GM12878 (cell line): ENCODE measurements at regions of chr10 and their contacts with region 1.

Region 1: DNA sequence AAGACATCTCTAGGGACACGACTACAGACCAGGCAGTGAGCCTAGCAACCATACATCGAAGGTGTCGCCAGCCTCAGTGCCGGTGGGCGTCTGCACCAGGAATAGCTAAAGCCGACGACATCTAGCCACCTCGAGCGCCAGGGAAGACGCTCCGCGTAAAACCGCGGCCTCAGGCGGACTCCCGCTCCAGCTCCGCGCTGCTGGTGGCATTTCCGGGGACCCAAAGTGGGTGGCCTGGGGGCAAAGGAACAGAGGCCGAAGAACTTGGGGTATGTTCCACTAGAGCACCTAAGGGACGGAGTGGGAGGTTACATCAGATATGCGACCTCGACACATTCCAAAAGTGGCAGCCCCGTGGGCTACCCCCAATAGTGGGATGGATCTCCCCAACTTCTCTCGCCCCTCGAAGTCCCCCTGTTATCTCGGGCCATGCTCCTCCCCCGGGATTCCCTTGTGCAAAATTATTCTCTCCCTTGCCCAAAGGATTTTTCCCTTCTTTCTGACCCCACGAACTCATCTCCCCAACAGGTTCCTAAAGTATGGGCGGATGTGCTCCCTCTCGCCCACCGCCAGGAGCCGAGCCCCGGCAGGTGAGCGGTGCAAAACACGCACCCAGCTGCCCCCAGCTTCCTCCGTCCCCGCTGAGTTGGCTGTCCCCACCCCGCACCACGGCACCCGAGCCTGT is 1.2 kb downstream of the KCNMA1 start:
- DNase-seq: no peak
- ATAC-seq: peak; percentile 27
- H3K4me3 ChIP-seq: no peak overlapping the region
- H3K27ac ChIP-seq: no peak overlapping the region
- H3K4me1 ChIP-seq: no peaks in the 10 kb centered on the region
- H3K27me3 ChIP-seq: no peaks in the 10 kb centered on the region; a peak in 1 of 4 replicates
- CTCF ChIP-seq: no peak
- EP300 ChIP-seq: no peak
- POLR2A ChIP-seq: no peak
- RAD21 ChIP-seq: no peak

Region 2: GRCh38 chr10:77165445-77166208 is 470.8 kb before region 1 on chr10:
- CTCF ChIA-PET with region 1: interaction called, 532 read pairs
- POLR2A ChIA-PET with region 1: interaction called, 3 read pairs
- RAD21 ChIA-PET with region 1: interaction called, 52 read pairs
- SMC1A ChIA-PET with region 1: interaction called, 113 read pairs
- in situ Hi-C with region 1: loop called (anchors 5 kb)
- intact Hi-C with region 1: no loop called
- DNase-seq: peak; percentile 24
- ATAC-seq: peak; percentile 95; the same call in 2 of the 3 replicates
- H3K4me3 ChIP-seq: no peak overlapping the region
- H3K27ac ChIP-seq: no peak overlapping the region
- H3K4me1 ChIP-seq: no peaks in the 10 kb centered on the region
- H3K27me3 ChIP-seq: no peaks in the 10 kb centered on the region
- CTCF ChIP-seq: peak; percentile 80 to 87 (median 81); a peak in 5 of 6 replicates
- EP300 ChIP-seq: no peak
- POLR2A ChIP-seq: no peak
- RAD21 ChIP-seq: peak; percentile 82

Region 3: GRCh38 chr10:77501152-77501845 is 135.1 kb before region 1 on chr10:
- CTCF ChIA-PET with region 1: interaction called, 14 read pairs
- POLR2A ChIA-PET with region 1: interaction called, 7 read pairs
- RAD21 ChIA-PET with region 1: interaction called, 33 read pairs
- SMC1A ChIA-PET with region 1: interaction called, 35 read pairs
- in situ Hi-C with region 1: no loop called
- intact Hi-C with region 1: no loop called
- DNase-seq: no peak
- ATAC-seq: peak; percentile 32
- H3K4me3 ChIP-seq: no peak overlapping the region
- H3K27ac ChIP-seq: no peak overlapping the region
- H3K4me1 ChIP-seq: peaks cover 11% of the 10 kb centered on the region
- H3K27me3 ChIP-seq: no peaks in the 10 kb centered on the region
- CTCF ChIP-seq: no peak
- EP300 ChIP-seq: no peak
- POLR2A ChIP-seq: no peak
- RAD21 ChIP-seq: no peak

Region 4: GRCh38 chr10:77603534-77603927 is 32.9 kb before region 1 on chr10:
- CTCF ChIA-PET with region 1: interaction called, 4 read pairs
- POLR2A ChIA-PET with region 1: interaction called, 4 read pairs
- RAD21 ChIA-PET with region 1: interaction called, 16 read pairs
- SMC1A ChIA-PET with region 1: interaction called, 15 read pairs
- in situ Hi-C with region 1: no loop called
- intact Hi-C with region 1: no loop called
- DNase-seq: no peak
- ATAC-seq: peak; percentile 88
- H3K4me3 ChIP-seq: no peak overlapping the region
- H3K27ac ChIP-seq: no peak overlapping the region
- H3K4me1 ChIP-seq: peaks cover 11% of the 10 kb centered on the region
- H3K27me3 ChIP-seq: no peaks in the 10 kb centered on the region
- CTCF ChIP-seq: no peak
- EP300 ChIP-seq: no peak
- POLR2A ChIP-seq: no peak
- RAD21 ChIP-seq: no peak

Region 5: DNA sequence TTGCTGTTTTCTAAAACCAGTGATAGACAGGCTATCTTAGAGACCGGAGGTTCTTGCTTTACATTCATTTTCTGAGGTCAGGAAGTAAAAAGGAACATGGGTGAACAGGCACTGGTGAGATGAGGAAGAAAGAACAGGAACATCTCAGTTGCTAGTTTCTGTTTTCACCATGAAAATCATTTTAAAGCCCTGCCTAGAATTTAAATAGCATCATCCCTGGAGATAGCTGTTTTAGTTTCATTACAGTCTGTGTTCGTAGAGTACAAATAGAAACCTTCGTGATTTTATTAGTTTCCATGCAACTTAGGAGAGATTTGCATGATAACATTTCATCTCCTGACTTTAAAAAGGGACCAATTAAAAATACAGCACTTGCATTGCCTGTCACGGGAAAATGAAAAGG is 13.5 kb before region 1 on chr10:
- CTCF ChIA-PET with region 1: interaction called, 20 read pairs
- POLR2A ChIA-PET with region 1: interaction called, 8 read pairs
- RAD21 ChIA-PET with region 1: interaction called, 7 read pairs
- SMC1A ChIA-PET with region 1: interaction called, 31 read pairs
- in situ Hi-C with region 1: no loop called
- intact Hi-C with region 1: no loop called
- DNase-seq: no peak
- ATAC-seq: peak; percentile 83
- H3K4me3 ChIP-seq: no peak overlapping the region
- H3K27ac ChIP-seq: no peak overlapping the region
- H3K4me1 ChIP-seq: 0 out of 2 replicates have a peak, but pooled peaks cover 5% of the 10 kb centered on the region
- H3K27me3 ChIP-seq: no peaks in the 10 kb centered on the region
- CTCF ChIP-seq: no peak
- EP300 ChIP-seq: no peak
- POLR2A ChIP-seq: no peak
- RAD21 ChIP-seq: no peak

Region 6: GRCh38 chr10:77865629-77866360 is 229.4 kb after region 1 on chr10:
- CTCF ChIA-PET with region 1: no interaction called
- POLR2A ChIA-PET with region 1: no interaction called
- RAD21 ChIA-PET with region 1: no interaction called
- SMC1A ChIA-PET with region 1: no interaction called
- in situ Hi-C with region 1: no loop called
- intact Hi-C with region 1: no loop called
- DNase-seq: no peak
- ATAC-seq: no peak
- H3K4me3 ChIP-seq: no peak overlapping the region
- H3K27ac ChIP-seq: no peak overlapping the region
- H3K4me1 ChIP-seq: no peaks in the 10 kb centered on the region
- H3K27me3 ChIP-seq: no peaks in the 10 kb centered on the region
- CTCF ChIP-seq: no peak
- EP300 ChIP-seq: no peak
- POLR2A ChIP-seq: no peak
- RAD21 ChIP-seq: no peak

Region 7: DNA sequence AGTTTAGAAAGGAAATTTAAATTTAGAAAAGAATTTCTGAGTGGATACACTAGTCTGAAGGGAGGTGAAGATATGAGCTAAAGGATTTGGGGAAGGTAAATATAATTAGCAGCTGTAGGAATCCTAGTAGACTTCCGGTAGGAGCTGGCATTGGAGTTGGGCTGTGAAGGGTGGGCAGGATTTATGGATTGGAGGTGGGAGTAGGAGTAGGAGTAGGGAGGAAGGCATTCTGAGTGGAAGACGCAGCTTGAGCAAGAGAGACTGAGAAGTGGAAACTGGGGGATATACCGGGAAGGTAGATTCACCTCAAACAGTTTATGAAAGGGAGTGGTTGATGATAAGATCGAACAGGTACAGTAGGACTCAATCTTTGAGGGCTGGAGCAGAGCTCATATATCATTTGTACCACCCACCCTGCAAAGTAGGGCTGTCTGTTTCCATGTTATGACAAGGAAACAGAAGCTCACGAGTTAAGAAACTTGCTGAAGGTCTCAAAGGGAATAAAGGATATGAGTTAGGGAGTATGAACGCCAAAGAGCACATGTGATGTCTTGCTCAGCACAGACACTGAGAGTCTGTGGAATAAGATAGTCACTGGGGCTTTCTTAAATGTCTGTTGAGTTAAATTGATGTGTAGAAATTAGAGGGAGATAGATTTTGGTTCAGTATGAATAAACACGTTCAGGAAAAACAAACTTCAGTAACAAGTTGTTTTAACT is 478.9 kb after region 1 on chr10:
- CTCF ChIA-PET with region 1: no interaction called
- POLR2A ChIA-PET with region 1: no interaction called
- RAD21 ChIA-PET with region 1: no interaction called
- SMC1A ChIA-PET with region 1: no interaction called
- in situ Hi-C with region 1: no loop called
- intact Hi-C with region 1: no loop called
- DNase-seq: no peak
- ATAC-seq: no peak
- H3K4me3 ChIP-seq: no peak overlapping the region
- H3K27ac ChIP-seq: no peak overlapping the region
- H3K4me1 ChIP-seq: no peaks in the 10 kb centered on the region
- H3K27me3 ChIP-seq: no peaks in the 10 kb centered on the region; a peak in 1 of 4 replicates
- CTCF ChIP-seq: no peak
- EP300 ChIP-seq: no peak
- POLR2A ChIP-seq: no peak
- RAD21 ChIP-seq: no peak